ENCODE measurements at regions of chr2 and their contacts with region 1.

Region 1: GRCh38 chr2:114488841-114489530 is 46.5 kb downstream of the DPP10 start:
- DNase-seq: no peak
- H3K4me3 ChIP-seq: no peak overlapping the region
- H3K27ac ChIP-seq: no peak overlapping the region
- H3K4me1 ChIP-seq: no peaks in the 10 kb centered on the region
- H3K27me3 ChIP-seq: no peaks in the 10 kb centered on the region
- CTCF ChIP-seq: no peak
- POLR2A ChIP-seq: no peak

Region 2: DNA sequence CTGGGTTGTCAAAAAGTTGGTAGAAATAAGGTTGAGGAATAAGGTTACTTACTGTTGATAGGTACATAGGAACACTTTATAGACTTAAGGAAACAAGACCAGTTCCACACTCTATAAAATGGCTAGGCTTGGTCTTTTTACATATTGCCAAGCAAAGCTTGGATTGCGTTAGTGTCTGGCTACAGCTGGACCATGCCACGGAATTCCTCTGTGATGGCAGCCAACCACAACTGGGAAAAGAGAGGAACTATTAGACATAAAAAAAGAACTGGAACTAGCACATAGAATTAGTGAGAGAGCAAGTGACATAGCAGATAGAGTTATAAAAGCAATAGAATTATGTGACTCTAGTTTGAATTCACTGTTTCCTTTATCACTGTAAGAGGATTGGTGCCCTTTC is 64.3 kb before region 1 on chr2:
- intact Hi-C with region 1: no loop called
- DNase-seq: no peak
- H3K4me3 ChIP-seq: no peak overlapping the region
- H3K27ac ChIP-seq: no peak overlapping the region
- H3K4me1 ChIP-seq: no peaks in the 10 kb centered on the region
- H3K27me3 ChIP-seq: no peaks in the 10 kb centered on the region
- CTCF ChIP-seq: no peak
- POLR2A ChIP-seq: no peak

Region 3: GRCh38 chr2:114515882-114516281 is 26.9 kb after region 1 on chr2:
- intact Hi-C with region 1: loop called (anchors 1 kb)
- DNase-seq: no peak
- H3K4me3 ChIP-seq: no peak overlapping the region
- H3K27ac ChIP-seq: no peak overlapping the region
- H3K4me1 ChIP-seq: no peaks in the 10 kb centered on the region
- H3K27me3 ChIP-seq: peaks cover 0 to 4% of the 10 kb centered on the region in 2 donors
- CTCF ChIP-seq: no peak
- POLR2A ChIP-seq: no peak

Region 4: GRCh38 chr2:114526841-114527240 is 37.9 kb after region 1 on chr2:
- intact Hi-C with region 1: no loop called
- DNase-seq: no peak
- H3K4me3 ChIP-seq: no peak overlapping the region
- H3K27ac ChIP-seq: no peak overlapping the region
- H3K4me1 ChIP-seq: no peaks in the 10 kb centered on the region
- H3K27me3 ChIP-seq: no peaks in the 10 kb centered on the region
- CTCF ChIP-seq: no peak
- POLR2A ChIP-seq: no peak

Measured in breast epithelium (tissue), 4 donors.